Activated B cell treated with CpG ODN at 0.5 μM for 24 hours (primary cell): ENCODE measurements at regions of chr14 and their contacts with region 1.

Region 1: GRCh38 chr14:20732979-20733635 is 12.6 kb upstream of the EDDM3A start:
- DNase-seq: no peak
- ATAC-seq: no peak
- H3K4me3 Mint-ChIP-seq: no peak overlapping the region
- H3K27ac Mint-ChIP-seq: no peak overlapping the region
- H3K4me1 Mint-ChIP-seq: peaks cover 12% of the 10 kb centered on the region
- H3K27me3 Mint-ChIP-seq: no peaks in the 10 kb centered on the region
- CTCF ChIP-seq: no peak

Region 2: DNA sequence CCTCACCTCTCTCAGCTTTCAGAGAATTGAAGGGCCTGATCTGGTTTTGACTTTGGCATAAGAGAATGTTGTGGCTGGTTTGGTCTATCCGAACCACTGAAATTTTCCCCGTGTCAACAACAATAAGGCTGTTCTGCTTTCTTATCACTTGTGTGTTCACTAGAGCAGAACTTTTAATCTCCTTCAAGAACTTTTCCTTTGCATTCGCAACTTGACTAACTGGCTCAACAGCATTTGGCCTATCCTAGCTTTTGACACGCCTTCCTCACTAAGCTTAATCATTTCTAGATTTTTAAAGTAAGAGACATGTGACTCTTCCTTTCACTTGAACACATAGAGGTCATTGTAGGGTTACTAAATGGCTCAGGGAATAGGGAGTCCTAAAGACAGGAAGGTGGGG is 13.3 kb before region 1 on chr14:
- CTCF ChIA-PET with region 1: no interaction called
- POLR2A ChIA-PET with region 1: interaction called, 3 read pairs
- intact Hi-C with region 1: loop called (anchors 2 kb)
- DNase-seq: no peak
- ATAC-seq: no peak
- H3K4me3 Mint-ChIP-seq: peak overlapping the region; percentile 12
- H3K27ac Mint-ChIP-seq: peak overlapping the region; percentile 16
- H3K4me1 Mint-ChIP-seq: peaks cover 59% of the 10 kb centered on the region
- H3K27me3 Mint-ChIP-seq: peaks cover 3% of the 10 kb centered on the region
- CTCF ChIP-seq: no peak

Region 3: DNA sequence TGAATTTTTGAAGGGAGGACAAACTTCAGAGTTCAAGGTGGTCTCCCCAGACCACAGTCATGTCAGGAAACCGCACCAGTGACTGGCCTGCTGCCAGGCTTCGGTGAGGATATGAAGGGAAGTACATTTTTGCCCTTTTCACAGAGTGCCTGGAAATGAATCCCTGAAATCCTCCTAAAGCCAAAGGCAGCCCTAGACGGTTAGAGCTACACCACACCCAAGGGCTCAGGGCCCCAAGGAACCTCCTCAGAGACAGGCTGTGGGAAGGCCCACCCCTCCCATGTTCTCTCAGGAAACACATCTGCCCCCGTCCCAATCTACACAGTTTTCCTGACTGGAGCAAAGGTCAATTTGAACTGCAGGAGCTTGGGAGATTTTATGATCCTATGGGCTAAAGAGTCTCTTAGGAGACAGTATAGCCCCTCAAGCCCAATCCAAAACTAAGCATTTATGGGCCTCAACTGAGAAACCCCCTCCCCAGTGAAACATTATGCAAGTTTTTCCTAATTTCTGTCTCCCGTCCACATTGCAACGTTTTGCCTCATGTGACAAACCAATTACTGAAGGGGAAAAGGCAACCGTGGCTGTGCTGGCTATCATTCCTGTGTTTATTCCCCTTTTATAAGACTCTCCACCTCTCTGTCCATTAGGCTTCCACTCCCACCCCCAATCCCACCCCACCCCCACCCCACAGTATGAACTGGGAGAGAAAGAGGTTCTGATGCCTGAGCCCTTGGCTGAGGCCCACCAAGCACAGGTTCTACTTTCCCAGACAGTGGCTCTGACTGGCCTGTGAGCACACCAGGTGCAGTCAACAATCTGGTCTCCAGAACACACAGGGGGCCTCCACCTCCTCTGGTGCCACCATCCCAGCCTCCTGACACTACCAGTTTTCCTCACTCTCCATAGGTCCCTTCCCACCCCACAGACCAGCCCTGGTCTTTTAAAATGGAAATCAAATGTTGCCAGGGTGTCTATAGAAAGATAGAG is 79.2 kb after region 1 on chr14:
- CTCF ChIA-PET with region 1: no interaction called
- POLR2A ChIA-PET with region 1: interaction called, 10 read pairs
- intact Hi-C with region 1: no loop called
- DNase-seq: no peak
- ATAC-seq: no peak
- H3K4me3 Mint-ChIP-seq: no peak overlapping the region
- H3K27ac Mint-ChIP-seq: no peak overlapping the region
- H3K4me1 Mint-ChIP-seq: peaks cover 21% of the 10 kb centered on the region
- H3K27me3 Mint-ChIP-seq: no peaks in the 10 kb centered on the region
- CTCF ChIP-seq: no peak